HepG2 (cell line): ENCODE measurements at regions of chr6 and their contacts with region 1.

Region 1: GRCh38 chr6:27893059-27893835 is 18.9 kb downstream of the OR2B2 start:
- DNase-seq: peak; percentile 99
- ATAC-seq: peak; percentile 70
- H3K4me3 ChIP-seq: peak overlapping the region; percentile 76 to 85 (median 82)
- H3K27ac ChIP-seq: peak overlapping the region; percentile 96
- H3K4me1 ChIP-seq: peaks cover 45% of the 10 kb centered on the region
- H3K27me3 ChIP-seq: no peaks in the 10 kb centered on the region; a peak in 1 of 5 replicates
- CTCF ChIP-seq: peak; percentile 39; the same call in 1 of the 2 replicates
- EP300 ChIP-seq: peak; percentile 41 to 53; a peak in 2 of 4 replicates
- POLR2A ChIP-seq: peak; percentile 98 to 99
- RAD21 ChIP-seq: peak; percentile 52; the same call in 1 of the 2 replicates

Region 2: DNA sequence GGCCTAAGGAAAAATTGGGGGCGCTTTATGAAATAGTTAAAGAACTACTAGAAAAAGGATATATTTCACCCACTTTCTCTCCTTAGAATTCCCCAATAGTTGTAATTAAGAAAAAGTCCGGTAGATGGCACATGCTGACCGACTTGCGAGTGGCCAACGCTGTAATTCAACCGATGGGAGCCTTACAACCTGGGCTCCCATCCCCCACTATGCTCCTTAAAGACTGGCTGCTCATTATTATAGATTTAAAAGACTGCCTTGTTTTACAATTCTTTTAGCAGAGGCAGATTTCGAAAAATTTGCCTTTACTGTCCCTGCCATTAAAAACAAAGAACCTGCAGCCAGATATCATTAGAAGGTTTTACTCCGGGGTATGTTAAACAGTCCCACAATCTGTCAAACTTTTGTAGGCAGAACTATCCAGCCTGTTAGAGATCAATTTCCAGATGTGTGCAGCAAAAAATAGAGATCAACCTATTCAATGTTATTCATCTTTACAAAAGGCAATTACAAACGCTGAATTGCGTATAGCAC is 704.3 kb before region 1 on chr6:
- CTCF ChIA-PET with region 1: interaction called, 5 read pairs
- POLR2A ChIA-PET with region 1: no interaction called
- in situ Hi-C with region 1: no loop called
- intact Hi-C with region 1: loop called (anchors 1 kb)
- DNase-seq: peak; percentile 66
- ATAC-seq: peak; percentile 88
- H3K4me3 ChIP-seq: peak overlapping the region; percentile 53 to 76 (median 75)
- H3K27ac ChIP-seq: no peak overlapping the region
- H3K4me1 ChIP-seq: peaks cover 16% of the 10 kb centered on the region
- H3K27me3 ChIP-seq: peaks cover 0 to 26% of the 10 kb centered on the region in 2 experiments; a peak in 3 of 5 replicates
- CTCF ChIP-seq: peak; percentile 79
- EP300 ChIP-seq: no peak
- POLR2A ChIP-seq: no peak
- RAD21 ChIP-seq: peak; percentile 82

Region 3: DNA sequence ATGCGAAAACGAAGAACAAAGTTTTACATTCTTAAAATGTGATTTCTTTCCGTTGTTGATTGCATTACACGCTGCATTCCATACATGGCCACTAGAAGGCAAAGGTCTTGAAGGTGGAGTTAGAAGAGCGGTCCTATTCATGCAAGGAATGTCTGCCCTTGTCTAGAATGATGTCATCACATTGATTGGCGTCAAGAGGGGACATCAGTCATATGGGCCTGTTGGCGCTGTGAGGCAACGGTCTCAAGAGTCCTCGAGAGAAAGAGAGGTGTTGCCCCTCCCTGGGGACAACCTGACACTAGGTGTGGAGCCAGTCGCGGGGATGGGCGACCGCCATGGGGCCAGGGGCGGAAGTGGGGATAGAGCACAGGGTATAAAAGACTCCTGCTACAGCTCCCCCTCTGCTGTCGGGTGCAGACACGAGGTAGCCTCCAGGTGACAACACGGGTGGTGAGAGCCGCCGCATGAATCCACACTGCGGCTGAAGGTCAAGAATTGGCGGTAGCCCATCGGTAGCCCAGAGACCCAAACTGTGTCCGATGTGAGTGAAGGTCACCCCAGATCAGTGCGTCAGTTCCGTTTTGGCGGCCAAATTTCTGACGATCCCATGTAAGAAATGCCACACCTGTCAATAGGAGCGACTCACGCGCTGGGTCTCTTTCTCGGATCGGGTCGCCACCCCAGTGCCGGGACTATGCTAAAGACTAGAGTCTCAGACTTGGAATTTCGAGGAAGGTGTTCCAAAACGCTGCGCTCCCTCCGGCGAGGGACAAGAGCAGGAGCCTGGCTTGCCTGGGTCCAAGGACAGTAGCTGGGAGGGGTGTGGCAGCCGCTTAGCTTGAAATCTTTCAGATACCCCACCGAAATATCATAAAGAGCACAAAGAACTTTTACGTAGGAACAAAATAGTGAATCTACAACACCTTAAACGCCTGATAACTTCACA is 327.2 kb before region 1 on chr6:
- CTCF ChIA-PET with region 1: no interaction called
- POLR2A ChIA-PET with region 1: no interaction called
- in situ Hi-C with region 1: no loop called
- intact Hi-C with region 1: no loop called
- DNase-seq: peak; percentile 62
- ATAC-seq: peak; percentile 80
- H3K4me3 ChIP-seq: peak overlapping the region in 1 of 3 experiments; percentile 26; a peak in 2 of 6 replicates
- H3K27ac ChIP-seq: no peak overlapping the region
- H3K4me1 ChIP-seq: peaks cover 14% of the 10 kb centered on the region
- H3K27me3 ChIP-seq: peaks cover 2 to 25% of the 10 kb centered on the region in 2 experiments; a peak in 2 of 5 replicates
- CTCF ChIP-seq: peak; percentile 26; the same call in 1 of the 2 replicates
- EP300 ChIP-seq: no peak
- POLR2A ChIP-seq: no peak
- RAD21 ChIP-seq: no peak

Region 4: DNA sequence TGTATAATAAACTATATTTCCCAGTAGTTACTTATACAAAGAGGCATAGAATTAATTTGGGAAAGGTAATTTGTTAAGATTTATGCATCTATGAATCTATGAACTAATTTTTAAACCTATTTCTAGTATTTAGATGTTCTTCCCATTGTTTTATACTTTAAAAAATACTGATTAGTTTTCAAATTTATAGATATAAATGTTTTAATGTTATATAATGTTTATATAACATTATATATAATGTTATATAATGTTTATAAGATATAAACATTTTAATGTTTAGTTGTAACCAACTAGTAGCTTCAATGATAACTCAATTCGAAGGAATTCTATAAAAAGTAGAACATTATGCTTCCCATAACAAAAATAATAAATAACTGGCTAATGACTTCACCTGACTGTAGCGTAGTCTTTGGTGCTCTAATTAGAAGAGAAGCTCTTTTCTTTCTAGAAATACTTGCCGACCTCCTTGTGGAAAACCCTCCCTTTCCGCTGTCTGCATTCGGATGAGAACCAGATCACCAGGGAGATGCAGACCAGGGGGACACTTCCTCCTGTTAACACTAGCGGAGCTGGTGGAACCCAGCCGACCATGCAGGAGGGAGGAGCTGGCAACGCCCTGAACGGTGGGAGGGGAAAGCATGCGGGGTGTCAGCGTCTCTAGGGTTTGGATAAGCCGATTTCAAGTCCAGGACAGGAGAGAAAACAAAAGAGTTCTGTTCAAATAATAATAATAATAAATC is 139.4 kb before region 1 on chr6:
- CTCF ChIA-PET with region 1: interaction called, 3 read pairs
- POLR2A ChIA-PET with region 1: interaction called, 12 read pairs
- in situ Hi-C with region 1: no loop called
- intact Hi-C with region 1: loop called (anchors 1 kb)
- DNase-seq: peak; percentile 83
- ATAC-seq: peak; percentile 76
- H3K4me3 ChIP-seq: peak overlapping the region; percentile 63 to 88 (median 78)
- H3K27ac ChIP-seq: no peak overlapping the region
- H3K4me1 ChIP-seq: peaks cover 21% of the 10 kb centered on the region
- H3K27me3 ChIP-seq: peaks cover 0 to 3% of the 10 kb centered on the region in 2 experiments; a peak in 1 of 5 replicates
- CTCF ChIP-seq: no peak
- EP300 ChIP-seq: no peak
- POLR2A ChIP-seq: no peak
- RAD21 ChIP-seq: no peak

Region 5: GRCh38 chr6:27809939-27810767 is 83.1 kb before region 1 on chr6:
- CTCF ChIA-PET with region 1: no interaction called
- POLR2A ChIA-PET with region 1: interaction called, 208 read pairs
- in situ Hi-C with region 1: loop called (anchors 5 kb)
- intact Hi-C with region 1: loop called (anchors 1 kb)
- DNase-seq: peak; percentile 98
- ATAC-seq: peak; percentile 57
- H3K4me3 ChIP-seq: peak overlapping the region; percentile 76 to 84 (median 79)
- H3K27ac ChIP-seq: peak overlapping the region; percentile 89
- H3K4me1 ChIP-seq: peaks cover 54% of the 10 kb centered on the region
- H3K27me3 ChIP-seq: no peaks in the 10 kb centered on the region; a peak in 1 of 5 replicates
- CTCF ChIP-seq: peak; percentile 65
- EP300 ChIP-seq: peak in 1 of 2 experiments; percentile 33; a peak in 1 of 4 replicates
- POLR2A ChIP-seq: peak; percentile 99 to 100
- RAD21 ChIP-seq: peak; percentile 58

Region 6: DNA sequence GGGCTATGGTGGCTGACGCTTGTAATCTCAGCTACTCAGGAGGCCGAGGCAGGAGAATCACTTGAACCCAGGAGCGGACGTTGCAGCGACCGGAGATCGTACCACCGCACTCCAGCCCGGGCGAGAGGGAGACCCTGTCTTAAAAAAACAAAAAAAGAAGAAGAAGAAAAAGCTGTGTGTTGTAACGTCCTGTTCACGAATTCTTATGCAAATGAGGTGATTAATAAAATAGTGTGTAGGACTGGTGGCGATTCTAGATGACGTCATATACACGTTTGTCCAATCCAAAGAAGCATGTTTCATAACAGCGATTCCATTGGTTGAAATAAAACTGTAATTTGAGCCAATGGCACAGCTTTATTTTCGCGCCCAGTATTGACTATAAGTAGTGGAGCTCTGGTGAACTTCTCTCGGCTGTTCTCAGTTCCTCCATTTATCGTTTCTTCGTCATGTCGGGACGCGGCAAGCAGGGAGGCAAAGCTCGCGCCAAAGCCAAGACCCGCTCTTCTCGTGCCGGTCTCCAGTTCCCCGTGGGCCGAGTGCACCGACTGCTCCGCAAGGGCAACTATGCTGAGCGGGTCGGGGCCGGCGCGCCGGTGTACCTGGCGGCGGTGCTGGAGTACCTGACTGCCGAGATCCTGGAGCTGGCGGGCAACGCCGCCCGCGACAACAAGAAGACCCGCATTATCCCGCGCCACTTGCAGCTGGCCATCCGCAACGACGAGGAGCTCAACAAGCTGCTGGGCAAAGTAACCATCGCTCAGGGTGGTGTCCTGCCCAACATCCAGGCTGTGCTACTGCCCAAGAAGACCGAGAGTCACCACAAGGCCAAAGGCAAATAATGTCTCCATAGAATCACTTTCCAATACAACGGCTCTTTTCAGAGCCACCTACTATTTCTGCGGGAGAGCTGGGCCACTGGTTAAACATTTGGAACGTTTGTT is 28.1 kb before region 1 on chr6:
- CTCF ChIA-PET with region 1: no interaction called
- POLR2A ChIA-PET with region 1: interaction called, 74 read pairs
- in situ Hi-C with region 1: no loop called
- intact Hi-C with region 1: loop called (anchors 1 kb)
- DNase-seq: peak; percentile 73
- ATAC-seq: peak; percentile 64
- H3K4me3 ChIP-seq: peak overlapping the region; percentile 52 to 70 (median 65)
- H3K27ac ChIP-seq: peak overlapping the region; percentile 9
- H3K4me1 ChIP-seq: peaks cover 38% of the 10 kb centered on the region
- H3K27me3 ChIP-seq: peaks cover 0 to 31% of the 10 kb centered on the region in 2 experiments; a peak in 3 of 5 replicates
- CTCF ChIP-seq: no peak
- EP300 ChIP-seq: no peak
- POLR2A ChIP-seq: peak; percentile 53 to 57; a peak in 3 of 4 replicates
- RAD21 ChIP-seq: no peak

Region 7: DNA sequence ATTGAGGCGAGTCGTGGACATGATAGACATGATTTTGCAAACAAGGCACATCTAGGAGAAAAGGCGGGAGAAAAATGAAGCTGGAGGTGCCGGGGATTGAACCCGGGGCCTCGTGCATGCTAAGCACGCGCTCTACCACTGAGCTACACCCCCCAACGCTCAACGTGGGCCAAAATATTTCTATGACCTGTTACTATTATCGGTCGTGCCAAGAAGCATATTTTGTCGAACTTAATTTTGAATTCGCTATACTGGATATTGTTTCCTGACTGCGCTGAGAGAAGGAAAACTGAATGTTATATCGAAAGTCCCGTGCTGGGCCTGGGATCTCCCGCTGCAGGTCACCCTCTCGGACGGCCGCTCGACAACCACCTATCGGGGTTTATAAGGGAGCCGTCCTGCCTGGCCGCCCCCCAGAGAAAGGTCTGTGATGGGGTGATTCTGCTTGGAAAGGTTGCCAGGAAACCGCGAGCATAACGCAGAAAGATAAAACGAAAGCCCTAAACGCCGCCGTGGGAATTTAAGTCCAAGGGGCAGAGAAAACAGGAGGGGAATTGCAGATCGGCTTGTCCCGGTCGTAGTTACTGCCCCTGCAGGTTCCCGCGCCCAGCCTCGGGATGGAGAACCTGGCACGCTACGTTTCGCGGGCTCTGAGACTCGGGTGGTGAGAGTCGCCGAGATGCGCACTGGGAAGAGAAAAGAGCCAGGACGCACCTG is 970.5 kb after region 1 on chr6:
- CTCF ChIA-PET with region 1: no interaction called
- POLR2A ChIA-PET with region 1: interaction called, 12 read pairs
- in situ Hi-C with region 1: no loop called
- intact Hi-C with region 1: no loop called
- DNase-seq: peak; percentile 72
- ATAC-seq: peak; percentile 47
- H3K4me3 ChIP-seq: peak overlapping the region; percentile 62 to 78 (median 63)
- H3K27ac ChIP-seq: peak overlapping the region; percentile 56
- H3K4me1 ChIP-seq: peaks cover 39% of the 10 kb centered on the region
- H3K27me3 ChIP-seq: peaks cover 0 to 11% of the 10 kb centered on the region in 2 experiments; a peak in 4 of 5 replicates
- CTCF ChIP-seq: no peak; the same call in 1 of the 2 replicates
- EP300 ChIP-seq: no peak
- POLR2A ChIP-seq: 0 out of 4 replicates have a peak, but pooled peaks of 1 of the 2 experiments have one; percentile 31
- RAD21 ChIP-seq: peak; percentile 14; the same call in 1 of the 2 replicates